ENCODE measurements at regions of chr17 and their contacts with region 1.

Region 1: GRCh38 chr17:10729334-10730193 is at the start of gene TMEM220:
- DNase-seq: peak; percentile 79
- H3K4me3 ChIP-seq: peak within 1 kb of the TSS; percentile 55 to 72 (median 64)
- H3K27ac ChIP-seq: peak within 1 kb of the TSS; percentile 89 to 94 (median 92)
- H3K4me1 ChIP-seq: peaks cover 0 to 45% (median 17%) of the 10 kb centered on the region in 4 donors
- H3K27me3 ChIP-seq: no peaks in the 10 kb centered on the region
- CTCF ChIP-seq: no peak
- EP300 ChIP-seq: no peak
- POLR2A ChIP-seq: peak; percentile 77
- total RNA-seq, gene TMEM220: 2.4 to 18.2 (median 8.1) TPM in 3 of 4 donors, not detected in the other

Region 2: GRCh38 chr17:10836966-10837590 is 107.5 kb after region 1 on chr17:
- in situ Hi-C with region 1: loop called in 3 of 4 experiments (anchors 10 kb)
- intact Hi-C with region 1: no loop called
- DNase-seq: peak; percentile 77
- H3K4me3 ChIP-seq: no peak overlapping the region
- H3K27ac ChIP-seq: peak overlapping the region in 3 of 4 donors; percentile 37 to 71 (median 59)
- H3K4me1 ChIP-seq: peaks cover 0 to 24% (median 12%) of the 10 kb centered on the region in 4 donors
- H3K27me3 ChIP-seq: no peaks in the 10 kb centered on the region
- CTCF ChIP-seq: no peak
- EP300 ChIP-seq: no peak
- POLR2A ChIP-seq: no peak

Region 3: DNA sequence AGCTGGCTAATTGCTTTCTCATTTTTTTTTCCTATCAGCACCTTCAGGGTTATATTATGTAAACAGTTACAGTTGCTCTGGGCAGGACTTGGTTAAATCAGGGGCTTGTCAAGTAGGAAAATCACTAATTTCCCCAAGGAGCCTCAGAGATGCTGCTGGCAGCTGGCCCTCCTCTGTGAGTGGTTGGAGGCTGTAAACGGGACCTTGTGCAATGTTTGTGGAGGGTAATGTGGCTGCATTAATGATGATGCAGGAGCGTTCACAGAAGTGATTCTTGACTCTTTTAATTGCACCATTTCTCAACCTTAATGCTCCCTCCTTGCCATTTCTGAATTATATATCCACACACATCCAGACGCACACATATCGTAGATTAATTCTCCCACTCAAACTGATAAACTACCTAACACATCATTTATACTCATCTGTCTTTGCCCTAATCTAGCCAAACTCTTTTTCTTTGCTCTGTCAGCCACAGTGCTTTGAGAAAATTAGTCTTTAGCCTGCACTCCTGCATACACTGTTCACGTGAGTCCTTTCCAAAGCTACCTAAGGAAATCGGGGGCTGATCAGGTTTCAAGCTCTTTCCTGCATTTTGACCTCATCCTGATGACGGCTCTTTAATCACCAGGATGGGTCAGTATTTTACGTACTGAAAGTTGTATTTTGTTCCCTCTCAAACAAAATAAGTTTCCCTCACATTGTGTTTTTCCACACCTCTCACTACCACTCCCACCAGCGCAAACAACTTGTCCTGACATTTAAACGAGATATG is 262.7 kb after region 1 on chr17:
- in situ Hi-C with region 1: no loop called
- intact Hi-C with region 1: no loop called
- DNase-seq: no peak
- H3K4me3 ChIP-seq: no peak overlapping the region
- H3K27ac ChIP-seq: no peak overlapping the region
- H3K4me1 ChIP-seq: no peaks in the 10 kb centered on the region
- H3K27me3 ChIP-seq: no peaks in the 10 kb centered on the region
- CTCF ChIP-seq: no peak
- EP300 ChIP-seq: no peak
- POLR2A ChIP-seq: no peak

Measured in transverse colon (tissue), 4 donors.